GM12878 (cell line): ENCODE measurements at regions of chr18 and their contacts with region 1.

Region 1: GRCh38 chr18:35972197-35973052 is at the start of gene RMP24:
- DNase-seq: peak; percentile 84
- ATAC-seq: peak; percentile 95
- H3K4me3 ChIP-seq: peak within 1 kb of the TSS; percentile 94
- H3K27ac ChIP-seq: peak within 1 kb of the TSS; percentile 69
- H3K4me1 ChIP-seq: peaks cover 21% of the 10 kb centered on the region
- H3K27me3 ChIP-seq: no peaks in the 10 kb centered on the region
- CTCF ChIP-seq: no peak
- EP300 ChIP-seq: peak in 1 of 2 experiments; percentile 44; a peak in 1 of 4 replicates
- POLR2A ChIP-seq: peak; percentile 97
- RAD21 ChIP-seq: no peak

Region 2: GRCh38 chr18:35592298-35592697 is 380.1 kb before region 1 on chr18:
- CTCF ChIA-PET with region 1: no interaction called
- POLR2A ChIA-PET with region 1: no interaction called
- RAD21 ChIA-PET with region 1: no interaction called
- SMC1A ChIA-PET with region 1: no interaction called
- in situ Hi-C with region 1: loop called (anchors 10 kb)
- intact Hi-C with region 1: loop called (anchors 5 kb)
- DNase-seq: peak; percentile 75
- ATAC-seq: peak; percentile 98
- H3K4me3 ChIP-seq: no peak overlapping the region
- H3K27ac ChIP-seq: peak overlapping the region; percentile 56
- H3K4me1 ChIP-seq: peaks cover 23% of the 10 kb centered on the region
- H3K27me3 ChIP-seq: no peaks in the 10 kb centered on the region
- CTCF ChIP-seq: no peak
- EP300 ChIP-seq: peak in 1 of 2 experiments; percentile 75; a peak in 2 of 4 replicates
- POLR2A ChIP-seq: no peak
- RAD21 ChIP-seq: no peak

Region 3: GRCh38 chr18:36025025-36025424 is 52.6 kb after region 1 on chr18:
- CTCF ChIA-PET with region 1: no interaction called
- POLR2A ChIA-PET with region 1: no interaction called
- RAD21 ChIA-PET with region 1: no interaction called
- SMC1A ChIA-PET with region 1: no interaction called
- in situ Hi-C with region 1: no loop called
- intact Hi-C with region 1: no loop called
- DNase-seq: no peak
- ATAC-seq: no peak
- H3K4me3 ChIP-seq: no peak overlapping the region
- H3K27ac ChIP-seq: no peak overlapping the region
- H3K4me1 ChIP-seq: no peaks in the 10 kb centered on the region
- H3K27me3 ChIP-seq: no peaks in the 10 kb centered on the region
- CTCF ChIP-seq: no peak
- EP300 ChIP-seq: no peak
- POLR2A ChIP-seq: no peak
- RAD21 ChIP-seq: no peak

Region 4: GRCh38 chr18:36255072-36255698 is 282.8 kb after region 1 on chr18:
- CTCF ChIA-PET with region 1: no interaction called
- POLR2A ChIA-PET with region 1: no interaction called
- RAD21 ChIA-PET with region 1: no interaction called
- SMC1A ChIA-PET with region 1: no interaction called
- in situ Hi-C with region 1: no loop called
- intact Hi-C with region 1: no loop called
- DNase-seq: no peak
- ATAC-seq: no peak
- H3K4me3 ChIP-seq: no peak overlapping the region
- H3K27ac ChIP-seq: no peak overlapping the region
- H3K4me1 ChIP-seq: no peaks in the 10 kb centered on the region
- H3K27me3 ChIP-seq: no peaks in the 10 kb centered on the region
- CTCF ChIP-seq: no peak
- EP300 ChIP-seq: no peak
- POLR2A ChIP-seq: no peak
- RAD21 ChIP-seq: no peak